ENCODE measurements at regions of chr14 and their contacts with region 1.

Region 1: GRCh38 chr14:22986508-22987054 is 4.2 kb upstream of the AJUBA start:
- DNase-seq: peak; percentile 87
- H3K4me3 Mint-ChIP-seq: no peak overlapping the region
- H3K27ac Mint-ChIP-seq: no peak overlapping the region
- H3K4me1 Mint-ChIP-seq: no peaks in the 10 kb centered on the region
- H3K27me3 Mint-ChIP-seq: no peaks in the 10 kb centered on the region
- CTCF ChIP-seq: peak; percentile 50

Region 2: DNA sequence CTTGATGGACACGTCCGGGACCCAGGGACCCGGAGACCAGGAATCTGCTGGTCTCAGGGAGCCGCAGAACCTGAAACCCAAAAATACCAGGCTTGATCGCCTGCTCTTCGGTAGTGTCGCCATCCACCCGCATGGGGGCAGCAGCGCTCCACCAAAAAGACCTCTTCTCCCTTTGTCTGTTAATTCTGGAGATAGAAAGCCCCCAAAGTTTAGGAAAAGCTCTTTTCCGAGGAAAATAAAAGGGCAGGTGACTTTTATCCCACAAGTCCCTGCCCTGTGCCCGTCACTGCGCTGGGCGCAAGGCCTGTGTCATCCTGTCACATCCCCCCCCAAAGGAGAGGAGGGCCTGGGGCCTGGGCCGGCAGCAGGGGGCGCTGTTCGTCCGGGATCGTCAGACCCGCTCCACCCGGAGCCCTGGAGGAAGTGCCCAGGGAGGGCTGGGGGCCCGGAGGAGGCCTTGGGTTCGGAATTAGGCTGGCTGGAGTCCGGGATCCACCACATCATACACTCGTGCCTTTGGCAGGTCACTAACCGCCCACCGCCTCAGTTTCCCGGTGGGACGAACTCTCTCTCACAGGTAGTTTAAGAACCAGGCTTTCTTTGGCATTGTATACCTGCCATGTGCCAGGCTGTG is 429.5 kb before region 1 on chr14:
- CTCF ChIA-PET with region 1: no interaction called
- intact Hi-C with region 1: loop called (anchors 5 kb)
- DNase-seq: peak; percentile 89
- H3K4me3 Mint-ChIP-seq: peak overlapping the region; percentile 24
- H3K27ac Mint-ChIP-seq: peak overlapping the region; percentile 96
- H3K4me1 Mint-ChIP-seq: peaks cover 63% of the 10 kb centered on the region
- H3K27me3 Mint-ChIP-seq: no peaks in the 10 kb centered on the region
- CTCF ChIP-seq: peak; percentile 94

Region 3: GRCh38 chr14:22929104-22929847 is 57.3 kb before region 1 on chr14 and contains the start of gene PRMT5:
- CTCF ChIA-PET with region 1: interaction called, 8 read pairs
- intact Hi-C with region 1: loop called (anchors 2 kb)
- DNase-seq: peak; percentile 97
- H3K4me3 Mint-ChIP-seq: no peak within 1 kb of the TSS
- H3K27ac Mint-ChIP-seq: no peak within 1 kb of the TSS
- H3K4me1 Mint-ChIP-seq: peaks cover 9% of the 10 kb centered on the region
- H3K27me3 Mint-ChIP-seq: no peaks in the 10 kb centered on the region
- CTCF ChIP-seq: no peak
- total RNA-seq, gene PRMT5: 101 and 113 TPM in 2 replicates

Region 4: DNA sequence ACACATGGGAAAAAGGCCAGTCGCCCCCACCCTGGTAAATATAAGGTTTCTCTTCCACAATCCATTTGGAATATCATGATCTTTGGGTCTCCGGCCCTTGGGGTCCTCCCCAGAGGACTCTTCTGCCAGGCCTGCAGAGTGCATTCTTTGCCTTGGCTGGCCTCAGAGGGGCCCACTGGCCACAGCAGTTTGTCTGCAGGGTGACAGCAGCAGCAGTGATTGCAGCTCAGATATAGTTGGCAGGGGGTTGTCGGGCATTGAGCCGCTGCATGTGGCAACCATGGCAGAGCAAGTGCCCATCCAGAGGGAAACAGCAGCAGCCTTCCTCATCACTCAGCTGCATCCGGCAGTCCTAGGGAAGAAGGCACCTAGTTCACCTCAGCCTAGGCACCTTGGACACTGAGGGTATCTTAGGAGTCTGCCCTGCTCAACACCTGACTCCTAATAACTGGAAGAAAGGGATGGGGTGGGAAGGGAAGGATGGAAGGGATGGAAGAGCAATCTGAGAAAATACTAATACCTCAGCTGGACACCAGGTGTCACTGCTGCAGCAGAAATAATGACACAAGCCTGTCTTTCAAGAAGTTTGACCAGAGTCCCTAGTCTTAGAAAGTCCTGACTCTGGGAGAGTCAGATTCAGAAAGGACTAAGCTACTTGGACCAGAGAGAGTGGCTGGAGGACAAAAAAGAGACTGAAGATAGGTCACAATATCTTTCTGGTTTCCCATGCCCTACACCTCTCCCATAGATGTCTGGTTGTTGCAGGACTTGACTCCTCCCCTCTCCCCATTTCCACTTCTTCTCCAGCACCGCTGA is 13.2 kb before region 1 on chr14:
- CTCF ChIA-PET with region 1: interaction called, 18 read pairs
- intact Hi-C with region 1: loop called (anchors 1 kb)
- DNase-seq: peak; percentile 62
- H3K4me3 Mint-ChIP-seq: no peak overlapping the region
- H3K27ac Mint-ChIP-seq: no peak overlapping the region
- H3K4me1 Mint-ChIP-seq: peaks cover 43% of the 10 kb centered on the region
- H3K27me3 Mint-ChIP-seq: no peaks in the 10 kb centered on the region
- CTCF ChIP-seq: peak; percentile 36

Region 5: GRCh38 chr14:23006544-23007419 is 20.2 kb after region 1 on chr14:
- CTCF ChIA-PET with region 1: interaction called, 15 read pairs
- intact Hi-C with region 1: no loop called
- DNase-seq: peak; percentile 96
- H3K4me3 Mint-ChIP-seq: peak overlapping the region; percentile 95
- H3K27ac Mint-ChIP-seq: peak overlapping the region; percentile 96
- H3K4me1 Mint-ChIP-seq: peaks cover 18% of the 10 kb centered on the region
- H3K27me3 Mint-ChIP-seq: no peaks in the 10 kb centered on the region
- CTCF ChIP-seq: no peak

Region 6: DNA sequence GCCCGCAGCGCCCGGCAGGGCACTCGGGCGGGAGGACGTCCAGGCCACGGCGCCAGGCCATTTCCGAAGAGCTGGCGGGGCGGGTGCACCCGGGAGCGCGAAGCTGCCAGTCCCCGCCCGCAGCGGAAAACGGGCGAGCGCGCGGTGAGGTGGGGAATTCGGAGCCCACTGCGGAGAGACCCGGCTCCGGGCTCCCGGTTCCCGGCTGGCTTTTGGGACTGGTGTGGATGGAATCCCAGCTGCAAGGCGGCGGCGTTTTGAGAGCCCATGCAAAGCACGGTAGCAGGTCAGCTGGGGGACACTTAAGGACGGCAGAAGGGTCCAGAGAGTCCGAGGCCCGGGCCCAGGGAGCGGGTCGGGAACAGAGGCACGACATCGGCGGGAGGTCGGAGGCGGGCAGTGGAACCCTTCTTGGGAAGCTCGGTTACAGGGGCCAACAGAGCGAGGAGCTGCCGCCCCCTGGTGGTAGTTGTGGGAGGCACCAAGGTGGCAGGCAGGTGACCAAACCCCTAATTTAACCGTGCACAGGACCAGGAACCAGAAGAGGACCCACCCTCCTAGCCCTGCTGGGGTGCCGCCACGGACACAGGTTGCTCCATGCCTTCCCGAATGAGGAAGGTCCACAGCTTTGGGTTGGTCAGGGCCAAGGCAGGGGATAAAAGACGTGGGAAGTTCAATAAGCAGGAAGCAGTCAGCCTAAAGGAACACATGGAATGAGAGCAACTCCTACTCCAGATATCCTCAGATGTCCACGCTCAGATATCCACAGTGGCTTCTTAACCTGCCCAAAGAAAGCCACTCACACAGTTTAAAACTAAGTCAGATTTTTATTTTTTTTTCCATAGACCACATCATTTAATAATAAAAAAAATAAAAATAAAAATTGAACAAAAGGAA is 71.4 kb after region 1 on chr14:
- CTCF ChIA-PET with region 1: interaction called, 46 read pairs
- intact Hi-C with region 1: loop called (anchors 2 kb)
- DNase-seq: peak; percentile 94
- H3K4me3 Mint-ChIP-seq: peak overlapping the region; percentile 69
- H3K27ac Mint-ChIP-seq: no peak overlapping the region
- H3K4me1 Mint-ChIP-seq: peaks cover 35% of the 10 kb centered on the region
- H3K27me3 Mint-ChIP-seq: no peaks in the 10 kb centered on the region
- CTCF ChIP-seq: peak; percentile 89

Region 7: GRCh38 chr14:23123419-23123818 is 136.8 kb after region 1 on chr14:
- CTCF ChIA-PET with region 1: no interaction called
- intact Hi-C with region 1: no loop called
- DNase-seq: peak; percentile 42
- H3K4me3 Mint-ChIP-seq: no peak overlapping the region
- H3K27ac Mint-ChIP-seq: no peak overlapping the region
- H3K4me1 Mint-ChIP-seq: peaks cover 24% of the 10 kb centered on the region
- H3K27me3 Mint-ChIP-seq: peaks cover 79% of the 10 kb centered on the region
- CTCF ChIP-seq: no peak

Measured in Calu3 (cell line).